ENCODE measurements at regions of chr2 and their contacts with region 1.

Region 1: GRCh38 chr2:24652265-24653182 is 140.7 kb downstream of the PTRHD1 start:
- DNase-seq: peak; percentile 2
- ATAC-seq: peak; percentile 29
- H3K4me3 ChIP-seq: no peak overlapping the region
- H3K27ac ChIP-seq: no peak overlapping the region
- H3K4me1 ChIP-seq: no peaks in the 10 kb centered on the region
- H3K27me3 ChIP-seq: no peaks in the 10 kb centered on the region
- CTCF ChIP-seq: no peak
- POLR2A ChIP-seq: no peak
- RAD21 ChIP-seq: no peak

Region 2: DNA sequence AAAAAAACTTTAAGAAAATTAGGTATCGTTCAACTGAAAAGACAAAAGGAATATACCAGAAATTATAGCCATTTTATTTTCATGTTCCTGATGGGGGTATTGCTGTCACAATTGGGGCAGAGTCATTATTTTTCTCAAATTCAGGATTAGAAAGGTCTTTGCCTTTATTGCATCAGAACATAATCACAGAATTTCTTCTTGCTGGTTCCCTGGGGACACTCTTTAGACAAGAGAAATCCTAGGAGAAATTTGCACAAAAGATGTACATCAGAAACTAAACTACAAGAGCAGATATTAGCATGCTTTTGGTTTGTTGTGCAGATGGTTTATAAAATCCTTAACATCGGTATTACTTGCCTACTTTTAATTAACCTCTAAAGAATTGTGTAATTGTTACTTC is 58.2 kb before region 1 on chr2:
- CTCF ChIA-PET with region 1: no interaction called
- POLR2A ChIA-PET with region 1: no interaction called
- dilution Hi-C with region 1: no loop called
- in situ Hi-C with region 1: no loop called
- intact Hi-C with region 1: loop called (anchors 5 kb)
- DNase-seq: no peak
- ATAC-seq: no peak
- H3K4me3 ChIP-seq: no peak overlapping the region
- H3K27ac ChIP-seq: no peak overlapping the region
- H3K4me1 ChIP-seq: no peaks in the 10 kb centered on the region
- H3K27me3 ChIP-seq: no peaks in the 10 kb centered on the region
- CTCF ChIP-seq: no peak
- POLR2A ChIP-seq: no peak
- RAD21 ChIP-seq: no peak